ENCODE measurements at regions of chr13 and their contacts with region 1.

Region 1: GRCh38 chr13:74133657-74134201 is 475 bp downstream of the KLF12 start:
- DNase-seq: peak; percentile 72
- H3K4me3 ChIP-seq: peak overlapping the region; percentile 66 to 92 (median 67)
- H3K27ac ChIP-seq: peak overlapping the region; percentile 77
- H3K4me1 ChIP-seq: peaks cover 8% of the 10 kb centered on the region
- H3K27me3 ChIP-seq: no peaks in the 10 kb centered on the region
- CTCF ChIP-seq: no peak

Region 2: DNA sequence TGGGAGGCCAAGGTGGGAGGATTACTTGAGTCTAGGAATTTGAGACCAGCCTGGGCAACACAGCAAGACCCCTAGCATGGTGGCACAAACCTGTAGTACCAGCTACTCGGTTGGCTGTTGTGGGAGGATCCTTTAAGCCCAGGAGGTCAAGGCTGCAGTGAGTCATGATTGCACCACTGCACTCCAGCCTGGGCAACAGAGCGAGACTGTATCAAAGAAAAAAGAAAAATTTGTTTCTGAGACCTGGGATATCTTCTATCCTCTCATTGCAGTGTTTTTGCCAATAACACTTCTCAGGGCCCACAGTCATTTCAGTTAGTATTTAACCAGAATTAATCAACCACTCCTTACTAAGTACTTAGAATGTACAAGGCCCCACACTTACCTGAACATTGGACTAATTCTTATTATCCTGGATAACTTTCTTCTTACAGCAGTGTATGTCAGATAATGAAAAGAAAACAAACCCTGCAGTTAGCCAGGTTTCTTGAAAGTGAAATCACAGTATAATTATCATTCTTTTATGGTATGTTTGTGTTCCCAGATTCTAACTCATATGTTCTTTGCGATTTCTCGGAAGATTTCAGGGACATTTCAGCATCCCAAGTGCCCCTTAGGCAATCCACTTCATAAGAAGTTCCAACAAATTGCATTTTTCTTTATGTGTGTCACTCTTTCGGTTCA is 1150.5 kb before region 1 on chr13:
- CTCF ChIA-PET with region 1: no interaction called
- dilution Hi-C with region 1: no loop called
- in situ Hi-C with region 1: no loop called
- intact Hi-C with region 1: no loop called
- DNase-seq: peak; percentile 33
- H3K4me3 ChIP-seq: no peak overlapping the region
- H3K27ac ChIP-seq: peak overlapping the region; percentile 35
- H3K4me1 ChIP-seq: no peaks in the 10 kb centered on the region
- H3K27me3 ChIP-seq: no peaks in the 10 kb centered on the region
- CTCF ChIP-seq: no peak

Region 3: GRCh38 chr13:73722120-73722519 is 411.6 kb before region 1 on chr13:
- CTCF ChIA-PET with region 1: no interaction called
- dilution Hi-C with region 1: no loop called
- in situ Hi-C with region 1: no loop called
- intact Hi-C with region 1: loop called (anchors 5 kb)
- DNase-seq: peak; percentile 94
- H3K4me3 ChIP-seq: no peak overlapping the region
- H3K27ac ChIP-seq: peak overlapping the region; percentile 80
- H3K4me1 ChIP-seq: peaks cover 33% of the 10 kb centered on the region
- H3K27me3 ChIP-seq: no peaks in the 10 kb centered on the region
- CTCF ChIP-seq: peak; percentile 43 to 56

Region 4: DNA sequence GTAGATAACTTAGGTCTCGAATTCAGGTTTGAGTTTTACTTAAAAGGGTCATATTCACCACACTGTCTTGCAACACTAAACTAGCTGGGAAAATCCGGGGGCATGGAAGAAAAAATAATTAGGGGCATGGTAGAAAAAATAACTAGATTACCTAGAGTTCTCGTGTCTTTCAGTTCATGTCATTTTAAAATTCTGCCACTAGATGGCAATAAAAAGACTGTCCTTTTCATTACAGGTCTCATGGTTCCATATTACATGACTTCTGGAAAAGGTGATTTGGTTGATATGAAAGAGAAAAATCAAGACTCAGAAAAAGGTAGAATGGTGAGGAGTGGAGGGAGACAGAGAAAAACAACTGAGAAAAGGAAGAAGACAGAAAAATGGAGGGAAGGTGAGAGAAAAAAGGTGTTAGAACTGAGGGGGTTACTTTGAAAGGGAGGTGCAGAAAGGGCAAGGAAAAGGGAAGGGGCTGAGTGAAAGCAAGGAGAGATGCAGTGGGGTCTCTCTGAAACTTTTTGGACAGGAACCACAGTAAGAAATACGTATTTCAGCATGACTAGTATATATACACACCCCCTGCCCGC is 298.5 kb before region 1 on chr13:
- CTCF ChIA-PET with region 1: no interaction called
- dilution Hi-C with region 1: no loop called
- in situ Hi-C with region 1: no loop called
- intact Hi-C with region 1: loop called (anchors 1 kb)
- DNase-seq: peak; percentile 36
- H3K4me3 ChIP-seq: no peak overlapping the region
- H3K27ac ChIP-seq: no peak overlapping the region
- H3K4me1 ChIP-seq: no peaks in the 10 kb centered on the region
- H3K27me3 ChIP-seq: no peaks in the 10 kb centered on the region
- CTCF ChIP-seq: peak; percentile 54 to 61

Region 5: DNA sequence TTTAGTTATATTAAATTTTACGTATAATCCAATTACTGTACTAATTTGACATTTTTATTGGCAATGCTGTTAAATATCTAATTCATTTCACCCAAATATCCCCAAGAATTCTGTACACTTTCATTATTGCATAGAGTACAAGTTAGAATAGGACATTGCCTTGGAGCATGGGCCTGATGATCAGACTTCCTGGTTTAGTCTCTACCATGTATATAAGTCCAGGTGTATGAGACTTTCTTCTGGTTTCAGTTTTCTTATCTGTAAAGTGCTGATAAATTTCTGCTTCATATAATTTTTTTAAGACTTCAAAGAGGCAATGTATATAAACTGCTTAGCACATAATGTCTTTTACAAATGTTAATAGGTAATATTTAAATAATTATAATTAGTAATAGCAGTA is 178.9 kb before region 1 on chr13:
- CTCF ChIA-PET with region 1: no interaction called
- dilution Hi-C with region 1: no loop called
- in situ Hi-C with region 1: no loop called
- intact Hi-C with region 1: no loop called
- DNase-seq: no peak
- H3K4me3 ChIP-seq: no peak overlapping the region
- H3K27ac ChIP-seq: no peak overlapping the region
- H3K4me1 ChIP-seq: no peaks in the 10 kb centered on the region
- H3K27me3 ChIP-seq: no peaks in the 10 kb centered on the region
- CTCF ChIP-seq: no peak

Region 6: DNA sequence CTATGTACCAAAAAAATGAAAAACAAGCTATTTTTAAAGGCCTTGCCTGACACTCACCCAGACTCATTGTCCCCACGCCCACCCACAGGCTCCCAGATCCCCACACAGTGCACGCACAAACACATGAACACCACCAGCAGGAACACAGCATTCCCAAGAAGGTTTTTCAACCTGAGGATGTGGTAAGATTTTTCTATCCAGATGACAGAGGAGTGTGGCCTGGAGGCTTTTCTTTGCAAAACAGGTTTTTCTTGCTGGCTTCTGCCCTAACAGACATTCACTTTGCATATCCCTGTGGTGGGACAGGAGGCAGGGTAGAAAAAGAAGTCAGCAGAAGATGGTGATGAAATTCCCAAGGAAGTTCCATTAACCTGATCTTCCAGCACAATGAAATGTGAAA is 97.4 kb before region 1 on chr13:
- CTCF ChIA-PET with region 1: no interaction called
- dilution Hi-C with region 1: no loop called
- in situ Hi-C with region 1: no loop called
- intact Hi-C with region 1: loop called (anchors 5 kb)
- DNase-seq: peak; percentile 87
- H3K4me3 ChIP-seq: no peak overlapping the region
- H3K27ac ChIP-seq: peak overlapping the region; percentile 10
- H3K4me1 ChIP-seq: peaks cover 9% of the 10 kb centered on the region
- H3K27me3 ChIP-seq: no peaks in the 10 kb centered on the region
- CTCF ChIP-seq: no peak

Region 7: DNA sequence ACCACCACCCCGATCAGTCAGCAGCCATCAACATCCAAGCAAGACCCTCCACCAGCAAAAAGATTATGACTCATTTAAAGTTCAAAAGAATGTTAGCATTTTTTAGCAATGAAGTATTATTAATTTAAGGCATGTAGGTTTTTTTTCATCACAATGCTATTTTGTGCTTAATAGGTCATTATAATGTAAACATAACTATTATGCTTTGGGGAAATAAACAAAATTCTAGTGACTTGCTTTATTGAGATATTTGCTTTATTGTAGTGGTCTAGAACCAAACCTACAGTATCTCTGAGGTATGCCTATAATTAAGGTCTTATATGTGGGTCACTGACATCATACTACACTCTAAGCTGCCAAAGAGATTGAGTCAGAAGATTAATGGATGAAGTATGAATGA is 19.5 kb before region 1 on chr13:
- CTCF ChIA-PET with region 1: no interaction called
- dilution Hi-C with region 1: no loop called
- in situ Hi-C with region 1: no loop called
- intact Hi-C with region 1: no loop called
- DNase-seq: peak; percentile 9
- H3K4me3 ChIP-seq: no peak overlapping the region
- H3K27ac ChIP-seq: no peak overlapping the region
- H3K4me1 ChIP-seq: peaks cover 14% of the 10 kb centered on the region
- H3K27me3 ChIP-seq: no peaks in the 10 kb centered on the region
- CTCF ChIP-seq: no peak

Region 8: DNA sequence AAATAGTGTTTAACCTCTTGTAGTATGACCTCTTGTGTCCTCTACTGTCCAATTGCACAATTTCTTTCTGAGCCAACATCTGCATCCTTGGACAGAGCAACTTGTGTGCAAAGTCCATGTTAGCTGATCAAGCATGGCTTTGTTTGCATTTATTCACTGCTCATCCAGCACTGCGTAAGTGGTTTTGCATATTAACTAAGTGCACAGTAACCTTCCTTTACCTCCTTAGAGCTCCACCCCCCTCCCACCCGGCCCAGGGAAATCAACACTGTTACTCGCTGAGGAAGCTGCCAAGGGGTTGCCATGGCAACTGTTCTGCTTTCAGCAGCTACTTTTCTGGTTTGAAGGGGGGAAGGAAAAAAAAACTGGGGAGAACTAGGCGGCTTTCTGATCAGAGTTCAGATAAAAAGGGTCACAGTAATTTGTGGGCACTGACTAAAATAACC is 154.0 kb after region 1 on chr13:
- CTCF ChIA-PET with region 1: no interaction called
- dilution Hi-C with region 1: no loop called
- in situ Hi-C with region 1: no loop called
- intact Hi-C with region 1: loop called (anchors 1 kb)
- DNase-seq: peak; percentile 30
- H3K4me3 ChIP-seq: no peak overlapping the region
- H3K27ac ChIP-seq: no peak overlapping the region
- H3K4me1 ChIP-seq: peaks cover 26% of the 10 kb centered on the region
- H3K27me3 ChIP-seq: no peaks in the 10 kb centered on the region
- CTCF ChIP-seq: no peak

Region 9: DNA sequence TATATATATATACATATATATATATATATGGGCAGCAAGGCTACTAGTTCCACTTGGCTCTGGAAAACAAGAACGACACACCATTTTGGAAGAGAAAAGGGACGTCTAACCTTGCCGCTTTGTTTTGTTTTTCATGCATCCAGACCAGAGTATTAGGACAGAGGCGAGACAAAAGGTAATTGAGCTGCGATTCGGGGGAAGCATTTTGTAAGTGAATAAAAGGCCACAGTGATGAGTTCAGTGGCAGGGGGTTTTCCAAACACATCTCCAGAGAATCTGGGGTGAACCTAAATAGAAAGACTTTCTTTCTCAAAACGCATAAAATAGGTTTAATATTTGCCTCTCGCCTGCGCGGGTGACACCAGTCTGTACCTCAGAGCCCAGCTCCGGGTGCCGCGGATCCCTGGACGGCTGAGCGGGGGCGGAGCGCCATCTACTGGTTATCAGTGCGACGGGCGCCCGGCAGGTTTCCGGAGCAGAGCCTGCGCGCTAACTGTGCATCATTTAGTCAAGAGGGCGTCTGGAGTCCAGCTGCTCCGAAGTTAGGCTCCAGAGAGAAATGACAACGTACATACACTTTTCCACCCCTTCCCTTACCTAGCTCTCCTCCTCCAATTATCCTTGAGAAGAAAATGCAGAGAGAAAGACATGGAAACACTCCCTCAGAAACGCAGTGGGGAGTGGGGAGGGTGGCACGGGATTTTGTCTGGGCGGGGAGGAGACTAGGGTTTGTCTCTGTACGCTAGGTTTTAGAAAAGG is 1085.9 kb after region 1 on chr13:
- CTCF ChIA-PET with region 1: no interaction called
- dilution Hi-C with region 1: no loop called
- in situ Hi-C with region 1: no loop called
- intact Hi-C with region 1: loop called (anchors 2 kb)
- DNase-seq: peak; percentile 59
- H3K4me3 ChIP-seq: peak overlapping the region; percentile 26 to 41 (median 30)
- H3K27ac ChIP-seq: no peak overlapping the region
- H3K4me1 ChIP-seq: peaks cover 14% of the 10 kb centered on the region
- H3K27me3 ChIP-seq: no peaks in the 10 kb centered on the region
- CTCF ChIP-seq: peak; percentile 89 to 96

Measured in mammary epithelial cell (primary cell).